Gastrocnemius medialis (tissue), 4 donors: ENCODE measurements at regions of chrX and their contacts with region 1.

Region 1: GRCh38 chrX:119606280-119607015 is at the start of gene NKRF:
- DNase-seq: peak; percentile 80 to 86
- ATAC-seq: peak; percentile 96 to 98
- H3K4me3 ChIP-seq: peak within 1 kb of the TSS; percentile 68 to 88 (median 79)
- H3K27ac ChIP-seq: peak within 1 kb of the TSS; percentile 86 to 91 (median 89)
- H3K4me1 ChIP-seq: no peaks in the 10 kb centered on the region
- H3K27me3 ChIP-seq: no peaks in the 10 kb centered on the region
- CTCF ChIP-seq: no peak
- POLR2A ChIP-seq: peak; percentile 84 to 87
- total RNA-seq, gene NKRF: 2.5 to 5.1 (median 4.3) TPM

Region 2: GRCh38 chrX:119235872-119236622 is 370.4 kb before region 1 on chrX and contains the start of gene PGRMC1:
- in situ Hi-C with region 1: no loop called
- intact Hi-C with region 1: loop called (anchors 5 kb)
- DNase-seq: peak; percentile 39 to 57
- ATAC-seq: peak; percentile 80 to 86
- H3K4me3 ChIP-seq: peak within 1 kb of the TSS; percentile 61 to 76 (median 69)
- H3K27ac ChIP-seq: peak within 1 kb of the TSS; percentile 64 to 77 (median 72)
- H3K4me1 ChIP-seq: no peaks in the 10 kb centered on the region
- H3K27me3 ChIP-seq: peaks cover 0 to 4% (median 0%) of the 10 kb centered on the region in 3 donors
- CTCF ChIP-seq: no peak
- POLR2A ChIP-seq: peak; percentile 63 to 64
- total RNA-seq, gene PGRMC1: 11.4 to 14.4 (median 13.0) TPM

Region 3: DNA sequence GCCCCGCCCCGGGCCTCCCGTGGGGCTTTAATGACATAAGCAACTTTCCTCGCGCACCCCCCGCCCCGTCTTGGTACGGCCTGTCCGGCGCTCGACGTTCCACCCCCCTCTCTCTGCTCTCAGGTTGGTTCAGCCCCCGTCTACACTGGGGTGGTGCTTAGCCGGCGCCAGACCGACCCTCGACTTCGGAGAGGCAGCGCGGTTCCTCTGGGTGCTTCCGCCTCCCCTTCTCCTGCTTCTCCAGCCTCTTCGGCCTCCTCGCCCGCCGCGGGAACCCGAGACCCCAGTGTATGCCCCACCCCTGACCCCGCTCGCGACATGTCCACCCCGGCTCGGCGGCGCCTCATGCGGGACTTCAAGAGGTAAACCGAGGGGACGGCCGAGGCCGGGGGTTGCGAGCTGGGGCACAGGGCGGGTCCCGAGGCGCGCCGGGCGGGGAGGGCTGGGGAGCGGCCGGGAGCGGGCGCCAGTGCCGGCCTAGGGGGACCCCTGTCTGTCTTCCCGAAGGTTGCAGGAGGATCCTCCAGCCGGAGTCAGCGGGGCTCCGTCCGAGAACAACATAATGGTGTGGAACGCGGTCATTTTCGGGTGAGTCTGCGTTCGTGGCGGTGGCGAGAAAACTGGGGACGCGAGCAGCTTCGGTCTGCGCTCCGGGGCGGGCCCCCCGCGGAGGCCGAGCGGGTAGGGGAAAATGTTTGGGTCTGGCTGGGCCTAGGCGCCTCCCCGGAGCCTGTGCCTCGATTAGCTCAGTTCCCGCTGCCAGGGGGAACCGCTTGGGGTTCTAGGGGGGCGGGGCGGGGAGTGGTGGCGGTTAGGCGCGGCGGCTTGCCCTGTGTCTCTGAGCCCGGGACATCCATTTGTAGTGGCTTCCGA is 31.8 kb before region 1 on chrX and contains the start of gene UBE2A:
- in situ Hi-C with region 1: no loop called
- intact Hi-C with region 1: loop called (anchors 2 kb)
- DNase-seq: peak; percentile 82 to 89
- ATAC-seq: peak; percentile 88 to 95
- H3K4me3 ChIP-seq: peak within 1 kb of the TSS; percentile 66 to 75 (median 72)
- H3K27ac ChIP-seq: peak within 1 kb of the TSS; percentile 84 to 96 (median 94)
- H3K4me1 ChIP-seq: peaks cover 0 to 7% of the 10 kb centered on the region in 2 donors
- H3K27me3 ChIP-seq: no peaks in the 10 kb centered on the region
- CTCF ChIP-seq: peak in 4 of 5 experiments; percentile 21 to 53 (median 38)
- POLR2A ChIP-seq: peak; percentile 80 to 88
- total RNA-seq, gene UBE2A: 28.1 to 41.7 (median 35.9) TPM

Region 4: DNA sequence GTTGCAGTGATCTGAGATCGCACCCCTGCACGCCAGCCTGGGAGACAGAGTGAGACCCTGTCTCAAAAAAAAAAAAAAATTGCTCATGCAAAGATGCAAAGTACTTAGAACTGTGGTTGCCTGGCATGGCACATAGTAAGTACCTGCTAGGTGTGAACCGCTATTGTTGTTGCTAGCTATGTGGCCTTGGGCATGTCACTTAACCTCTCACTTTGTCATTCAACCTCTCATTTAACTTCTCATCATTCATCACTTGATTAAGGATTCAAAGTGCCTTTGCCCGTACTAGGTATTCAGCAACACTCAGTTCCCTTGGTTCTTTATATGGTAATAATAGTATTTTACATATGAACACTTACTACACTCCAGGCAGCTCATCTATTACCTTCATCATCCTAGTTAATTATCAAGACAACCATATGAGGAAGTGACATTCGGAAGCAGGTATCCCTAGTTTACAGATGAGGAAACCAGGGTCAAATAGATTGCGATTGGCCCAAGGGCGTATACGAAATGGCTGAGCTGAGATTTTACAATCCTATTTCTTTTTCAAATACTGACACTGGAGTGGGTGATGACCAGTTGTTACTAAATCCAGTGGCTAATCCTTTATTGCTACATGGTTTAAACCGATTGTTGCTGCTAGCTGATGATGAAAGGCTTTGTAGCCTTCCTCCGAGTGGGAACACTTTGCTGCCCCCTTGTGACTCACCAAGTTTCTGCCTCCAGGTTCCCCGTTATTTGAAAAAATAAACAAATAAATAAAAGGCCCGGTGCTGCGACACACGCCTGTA is 123.2 kb after region 1 on chrX:
- in situ Hi-C with region 1: loop called in 1 of 4 experiments (anchors 25 kb)
- intact Hi-C with region 1: no loop called
- DNase-seq: peak; percentile 22 to 31
- ATAC-seq: peak in 1 of 2 donors; percentile 55
- H3K4me3 ChIP-seq: no peak overlapping the region
- H3K27ac ChIP-seq: no peak overlapping the region
- H3K4me1 ChIP-seq: no peaks in the 10 kb centered on the region
- H3K27me3 ChIP-seq: no peaks in the 10 kb centered on the region
- CTCF ChIP-seq: peak in 4 of 5 experiments; percentile 11 to 53 (median 40)
- POLR2A ChIP-seq: no peak

Region 5: GRCh38 chrX:119791438-119792231 is 185.2 kb after region 1 on chrX and contains the start of gene RPL39:
- in situ Hi-C with region 1: no loop called
- intact Hi-C with region 1: loop called (anchors 2 kb)
- DNase-seq: peak; percentile 71 to 80
- ATAC-seq: peak; percentile 98
- H3K4me3 ChIP-seq: peak within 1 kb of the TSS; percentile 76 to 95 (median 82)
- H3K27ac ChIP-seq: peak within 1 kb of the TSS; percentile 94 to 96 (median 96)
- H3K4me1 ChIP-seq: peaks cover 14 to 26% of the 10 kb centered on the region in 2 donors
- H3K27me3 ChIP-seq: no peaks in the 10 kb centered on the region
- CTCF ChIP-seq: no peak
- POLR2A ChIP-seq: peak; percentile 72 to 86
- total RNA-seq, gene RPL39: 3,033 to 5,904 (median 3,913) TPM